ENCODE measurements at regions of chr9 and their contacts with region 1.

Region 1: DNA sequence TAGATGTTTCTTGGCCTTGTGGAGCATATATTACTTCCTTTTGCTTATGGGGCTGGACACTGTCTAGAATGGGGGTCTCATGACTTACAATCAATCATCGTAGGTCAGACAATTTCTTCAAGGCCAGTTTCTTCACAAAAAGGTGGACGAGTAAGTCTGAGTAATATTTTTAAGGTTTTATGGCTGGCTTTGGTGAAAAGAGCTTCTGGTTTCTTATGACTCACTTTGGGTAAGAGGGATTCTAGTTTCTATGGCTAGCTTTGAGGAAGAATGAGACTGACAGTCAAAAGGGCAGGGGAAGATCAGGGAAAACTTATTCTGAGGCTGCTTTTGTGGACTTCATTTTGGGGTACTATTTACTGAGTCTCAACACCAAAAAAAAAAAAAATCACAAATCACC is 2067.2 kb upstream of the C9orf72 start:
- DNase-seq: no peak
- ATAC-seq: no peak
- H3K4me3 ChIP-seq: no peak overlapping the region
- H3K27ac ChIP-seq: no peak overlapping the region
- H3K4me1 ChIP-seq: no peaks in the 10 kb centered on the region
- H3K27me3 ChIP-seq: no peaks in the 10 kb centered on the region
- CTCF ChIP-seq: no peak

Region 2: GRCh38 chr9:29588361-29588760 is 52.1 kb before region 1 on chr9:
- CTCF ChIA-PET with region 1: no interaction called
- POLR2A ChIA-PET with region 1: interaction called, 10 read pairs
- in situ Hi-C with region 1: no loop called
- intact Hi-C with region 1: no loop called
- DNase-seq: no peak
- ATAC-seq: no peak
- H3K4me3 ChIP-seq: no peak overlapping the region
- H3K27ac ChIP-seq: no peak overlapping the region
- H3K4me1 ChIP-seq: no peaks in the 10 kb centered on the region
- H3K27me3 ChIP-seq: no peaks in the 10 kb centered on the region
- CTCF ChIP-seq: no peak